PC-9 (cell line): ENCODE measurements at regions of chr17 and their contacts with region 1.

Region 1: GRCh38 chr17:39916918-39917317 is 1.5 kb downstream of the GSDMB start:
- DNase-seq: no peak
- H3K4me3 ChIP-seq: no peak overlapping the region
- H3K27ac ChIP-seq: no peak overlapping the region
- H3K4me1 ChIP-seq: no peaks in the 10 kb centered on the region
- H3K27me3 ChIP-seq: no peaks in the 10 kb centered on the region
- CTCF ChIP-seq: no peak

Region 2: DNA sequence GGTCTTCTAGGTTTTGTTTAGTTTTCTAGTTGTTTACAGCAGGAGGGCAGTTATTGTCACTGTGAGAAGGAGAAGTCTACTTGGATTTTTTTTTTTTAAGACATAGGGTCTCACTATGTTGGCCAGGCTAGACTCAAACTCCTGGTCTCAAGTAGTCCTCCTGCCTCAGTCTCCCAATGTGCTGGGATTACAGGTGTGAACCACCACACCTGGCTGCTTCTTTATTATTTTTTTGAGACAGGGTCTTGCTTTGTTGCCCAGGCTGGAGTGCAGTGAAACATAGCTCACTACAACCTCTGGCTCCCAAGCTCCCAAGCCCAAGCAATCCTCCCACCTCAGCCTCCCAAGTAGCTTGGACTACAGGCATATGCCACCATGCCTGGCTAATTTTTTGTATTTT is 622.9 kb before region 1 on chr17:
- CTCF ChIA-PET with region 1: no interaction called
- POLR2A ChIA-PET with region 1: interaction called, 38 read pairs
- intact Hi-C with region 1: no loop called
- DNase-seq: no peak
- H3K4me3 ChIP-seq: no peak overlapping the region
- H3K27ac ChIP-seq: no peak overlapping the region
- H3K4me1 ChIP-seq: no peaks in the 10 kb centered on the region
- H3K27me3 ChIP-seq: no peaks in the 10 kb centered on the region
- CTCF ChIP-seq: no peak

Region 3: GRCh38 chr17:39894681-39895376 is 22.1 kb before region 1 on chr17:
- CTCF ChIA-PET with region 1: no interaction called
- POLR2A ChIA-PET with region 1: interaction called, 23 read pairs
- intact Hi-C with region 1: no loop called
- DNase-seq: no peak
- H3K4me3 ChIP-seq: no peak overlapping the region
- H3K27ac ChIP-seq: no peak overlapping the region
- H3K4me1 ChIP-seq: peaks cover 16% of the 10 kb centered on the region
- H3K27me3 ChIP-seq: no peaks in the 10 kb centered on the region
- CTCF ChIP-seq: no peak